H1 (cell line): ENCODE measurements at regions of chr2 and their contacts with region 1.

Region 1: DNA sequence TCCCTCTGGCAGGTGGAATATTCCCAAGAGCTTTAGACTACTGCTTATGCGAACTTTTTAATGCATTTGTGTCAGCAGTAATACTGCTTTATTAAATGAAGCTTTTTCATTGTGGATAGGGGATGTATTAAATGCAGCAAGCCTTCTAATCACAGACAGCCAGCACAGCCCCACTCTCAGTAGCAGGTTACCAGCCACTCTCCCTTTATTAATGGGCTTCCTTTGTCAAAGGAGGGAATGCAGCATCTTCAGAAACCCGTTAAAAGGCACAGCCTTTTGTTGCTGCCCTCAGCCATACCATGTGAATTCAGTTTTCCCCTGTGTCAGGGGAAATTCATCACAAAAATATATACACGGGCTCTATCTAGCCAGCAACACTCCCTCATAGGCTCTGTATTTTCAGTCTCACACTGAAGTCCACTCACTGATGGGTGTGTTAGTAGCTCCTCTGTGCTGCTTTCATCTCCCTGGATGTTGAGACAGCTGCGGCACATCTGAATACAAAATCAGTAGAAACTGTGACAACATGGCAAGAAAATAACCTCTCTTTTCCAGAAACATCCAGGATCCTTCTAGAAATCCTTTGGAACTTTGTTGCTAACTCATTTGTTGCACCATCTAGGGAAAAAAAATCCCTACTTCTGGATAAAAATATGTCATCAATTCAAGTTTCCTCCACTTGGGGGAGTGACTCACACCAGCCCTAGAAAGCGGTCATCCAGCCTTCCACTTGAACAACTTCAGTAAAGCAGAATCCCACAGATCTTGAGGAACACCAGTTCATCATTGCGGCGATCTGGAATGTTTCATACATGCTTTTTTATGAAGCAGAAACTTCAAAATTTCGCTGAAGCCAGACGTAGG is 48.4 kb downstream of the LRRTM1 start:
- DNase-seq: no peak
- H3K4me3 ChIP-seq: no peak overlapping the region
- H3K27ac ChIP-seq: no peak overlapping the region
- H3K4me1 ChIP-seq: peaks cover 0 to 4% (median 2%) of the 10 kb centered on the region in 4 experiments; a peak in 1 of 7 replicates
- H3K27me3 ChIP-seq: no peaks in the 10 kb centered on the region; a peak in 1 of 7 replicates
- CTCF ChIP-seq: peak; percentile 8 to 59 (median 51)
- EP300 ChIP-seq: no peak
- POLR2A ChIP-seq: no peak
- RAD21 ChIP-seq: peak; percentile 56 to 67

Region 2: GRCh38 chr2:80073134-80073561 is 183.0 kb before region 1 on chr2:
- CTCF ChIA-PET with region 1: interaction called, 21 read pairs
- POLR2A ChIA-PET with region 1: no interaction called
- DNase-seq: no peak
- H3K4me3 ChIP-seq: no peak overlapping the region
- H3K27ac ChIP-seq: no peak overlapping the region
- H3K4me1 ChIP-seq: no peaks in the 10 kb centered on the region
- H3K27me3 ChIP-seq: no peaks in the 10 kb centered on the region; a peak in 1 of 7 replicates
- CTCF ChIP-seq: peak; percentile 21 to 77 (median 73)
- EP300 ChIP-seq: no peak
- POLR2A ChIP-seq: no peak
- RAD21 ChIP-seq: peak; percentile 85 to 88

Region 3: DNA sequence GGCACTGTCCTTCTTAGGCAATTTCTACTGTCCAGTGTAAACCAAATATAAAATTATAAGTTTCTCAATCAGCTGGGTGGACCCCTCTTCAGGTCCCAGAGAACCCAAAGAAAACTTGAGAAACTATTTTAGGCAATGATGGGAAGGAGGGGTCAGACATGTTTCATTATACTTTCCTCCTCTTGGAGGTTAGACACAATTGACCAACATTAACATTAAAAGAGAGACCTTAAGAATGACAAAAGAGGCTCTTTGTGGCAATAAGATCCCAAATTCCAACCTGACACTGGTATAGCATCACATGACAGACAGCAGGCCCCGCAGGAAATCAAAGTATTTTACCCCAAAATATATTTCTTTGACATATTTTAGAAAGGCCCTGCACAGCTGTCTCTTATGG is 24.7 kb before region 1 on chr2:
- CTCF ChIA-PET with region 1: no interaction called
- POLR2A ChIA-PET with region 1: no interaction called
- DNase-seq: no peak
- H3K4me3 ChIP-seq: no peak overlapping the region
- H3K27ac ChIP-seq: no peak overlapping the region
- H3K4me1 ChIP-seq: peaks cover 0 to 6% (median 1%) of the 10 kb centered on the region in 4 experiments; a peak in 3 of 7 replicates
- H3K27me3 ChIP-seq: no peaks in the 10 kb centered on the region
- CTCF ChIP-seq: no peak
- EP300 ChIP-seq: no peak
- POLR2A ChIP-seq: no peak
- RAD21 ChIP-seq: no peak

Region 4: DNA sequence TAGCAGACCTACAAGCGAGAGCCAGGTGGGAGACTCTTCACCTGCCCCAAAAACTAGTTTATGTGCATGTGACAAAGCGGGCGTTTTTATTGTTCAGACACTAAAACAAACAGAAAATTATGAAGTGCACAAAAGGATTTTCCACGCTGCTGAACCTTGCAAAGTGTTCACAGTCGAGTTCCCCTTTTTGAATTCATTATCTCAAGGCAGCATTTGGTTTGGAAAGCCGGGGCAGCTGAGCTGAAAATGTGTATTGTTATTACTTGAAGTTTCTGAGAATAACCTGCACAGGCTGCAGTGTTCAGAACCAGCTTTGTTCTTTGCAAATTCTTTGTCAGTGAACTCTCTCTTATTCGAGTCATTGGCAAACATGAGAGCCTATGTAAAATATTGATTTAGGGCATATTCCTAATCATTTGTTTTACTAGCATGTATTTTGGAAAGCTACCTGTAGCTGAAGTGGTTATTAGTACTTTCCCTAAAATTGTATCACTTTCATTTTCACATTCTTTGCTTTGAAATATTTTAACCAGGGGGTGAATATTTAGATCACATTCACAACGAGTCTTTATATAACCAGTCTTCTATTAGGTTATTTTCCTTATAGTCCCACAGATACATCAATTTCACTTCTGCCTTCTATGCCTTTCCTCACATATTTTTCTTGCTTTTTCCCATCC is 11.1 kb before region 1 on chr2:
- CTCF ChIA-PET with region 1: interaction called, 31 read pairs
- POLR2A ChIA-PET with region 1: interaction called, 3 read pairs
- DNase-seq: no peak
- H3K4me3 ChIP-seq: no peak overlapping the region
- H3K27ac ChIP-seq: no peak overlapping the region
- H3K4me1 ChIP-seq: no peaks in the 10 kb centered on the region
- H3K27me3 ChIP-seq: no peaks in the 10 kb centered on the region
- CTCF ChIP-seq: no peak
- EP300 ChIP-seq: no peak
- POLR2A ChIP-seq: no peak
- RAD21 ChIP-seq: no peak

Region 5: GRCh38 chr2:80266231-80266630 is 10.1 kb after region 1 on chr2:
- CTCF ChIA-PET with region 1: interaction called, 19 read pairs
- POLR2A ChIA-PET with region 1: interaction called, 3 read pairs
- DNase-seq: no peak
- H3K4me3 ChIP-seq: no peak overlapping the region
- H3K27ac ChIP-seq: no peak overlapping the region
- H3K4me1 ChIP-seq: no peaks in the 10 kb centered on the region
- H3K27me3 ChIP-seq: no peaks in the 10 kb centered on the region
- CTCF ChIP-seq: no peak
- EP300 ChIP-seq: no peak
- POLR2A ChIP-seq: no peak
- RAD21 ChIP-seq: no peak

Region 6: GRCh38 chr2:80288576-80288975 is 32.4 kb after region 1 on chr2:
- CTCF ChIA-PET with region 1: interaction called, 10 read pairs
- POLR2A ChIA-PET with region 1: no interaction called
- DNase-seq: no peak
- H3K4me3 ChIP-seq: no peak overlapping the region
- H3K27ac ChIP-seq: no peak overlapping the region
- H3K4me1 ChIP-seq: no peaks in the 10 kb centered on the region
- H3K27me3 ChIP-seq: peaks cover 0 to 1% (median 0%) of the 10 kb centered on the region in 4 experiments; a peak in 1 of 7 replicates
- CTCF ChIP-seq: peak in 2 of 3 experiments; percentile 9 to 21; a peak in 1 of 4 replicates
- EP300 ChIP-seq: no peak
- POLR2A ChIP-seq: no peak
- RAD21 ChIP-seq: peak; percentile 46 to 59